Dorsolateral prefrontal cortex (tissue), 120 donors: ENCODE measurements at regions of chr12 and their contacts with region 1.

Region 1: DNA sequence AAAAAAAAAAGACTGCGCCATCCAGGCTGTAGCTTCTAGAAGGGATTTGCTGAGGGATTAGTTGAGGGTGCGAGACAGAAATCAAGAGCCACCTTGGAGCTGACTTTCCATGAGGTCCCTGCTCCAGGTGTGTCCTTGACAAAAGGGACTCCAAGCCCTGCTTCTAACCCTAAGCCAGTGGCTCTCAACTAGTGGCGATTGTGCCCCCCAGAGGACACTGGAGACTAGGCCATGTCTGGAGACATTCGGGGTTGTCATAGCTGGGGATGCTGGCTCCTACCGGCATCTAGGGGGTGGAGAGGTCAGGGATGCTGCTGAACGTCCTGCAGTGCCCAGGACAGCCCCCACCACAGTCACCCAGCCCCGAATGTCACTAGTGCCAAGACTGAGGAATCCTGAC is 40.6 kb downstream of the SPRING1 start:
- DNase-seq: no peak
- H3K4me3 ChIP-seq: no peak overlapping the region
- H3K27ac ChIP-seq: no peak overlapping the region
- H3K27me3 ChIP-seq: peaks cover 0 to 16% (median 3%) of the 10 kb centered on the region in 45 donors
- CTCF ChIP-seq: peak in 27 of 56 donors; percentile 7 to 40 (median 20)

Region 2: DNA sequence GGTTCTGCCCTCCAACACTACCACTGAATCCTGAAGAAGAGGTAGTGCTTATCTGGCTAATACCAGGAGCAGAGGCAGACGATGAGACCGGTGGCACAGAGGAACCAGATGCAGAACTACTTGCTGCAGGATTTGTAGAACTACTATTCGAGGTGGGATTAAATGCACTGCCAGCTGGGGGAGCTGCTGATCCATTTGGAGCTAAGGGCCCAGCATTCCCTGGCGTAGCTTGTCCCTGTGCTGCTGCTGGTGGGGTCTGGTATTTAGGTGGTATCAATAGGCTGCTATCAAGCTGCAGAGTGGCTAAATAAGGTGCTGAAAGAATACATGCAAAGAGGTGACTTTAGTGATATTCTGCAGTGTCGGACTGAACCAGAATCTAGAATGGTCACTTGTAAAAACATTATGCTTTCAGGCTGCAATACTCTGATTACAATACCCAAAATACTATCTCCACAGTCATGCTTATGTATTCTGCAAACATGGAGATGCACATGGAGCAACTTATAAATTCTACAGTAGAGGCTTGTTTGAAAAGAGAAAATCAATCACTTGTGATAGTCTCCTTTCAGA is 714.0 kb before region 1 on chr12:
- intact Hi-C with region 1: loop called in 1 of 2 experiments (anchors 10 kb)
- DNase-seq: no peak
- H3K4me3 ChIP-seq: no peak overlapping the region
- H3K27ac ChIP-seq: peak overlapping the region in 1 of 59 donors; percentile 3
- H3K27me3 ChIP-seq: no peaks in the 10 kb centered on the region
- CTCF ChIP-seq: peak in 8 of 56 donors; percentile 4 to 27 (median 14)